GM23248 (cell line): ENCODE measurements at regions of chr17 and their contacts with region 1.

Region 1: DNA sequence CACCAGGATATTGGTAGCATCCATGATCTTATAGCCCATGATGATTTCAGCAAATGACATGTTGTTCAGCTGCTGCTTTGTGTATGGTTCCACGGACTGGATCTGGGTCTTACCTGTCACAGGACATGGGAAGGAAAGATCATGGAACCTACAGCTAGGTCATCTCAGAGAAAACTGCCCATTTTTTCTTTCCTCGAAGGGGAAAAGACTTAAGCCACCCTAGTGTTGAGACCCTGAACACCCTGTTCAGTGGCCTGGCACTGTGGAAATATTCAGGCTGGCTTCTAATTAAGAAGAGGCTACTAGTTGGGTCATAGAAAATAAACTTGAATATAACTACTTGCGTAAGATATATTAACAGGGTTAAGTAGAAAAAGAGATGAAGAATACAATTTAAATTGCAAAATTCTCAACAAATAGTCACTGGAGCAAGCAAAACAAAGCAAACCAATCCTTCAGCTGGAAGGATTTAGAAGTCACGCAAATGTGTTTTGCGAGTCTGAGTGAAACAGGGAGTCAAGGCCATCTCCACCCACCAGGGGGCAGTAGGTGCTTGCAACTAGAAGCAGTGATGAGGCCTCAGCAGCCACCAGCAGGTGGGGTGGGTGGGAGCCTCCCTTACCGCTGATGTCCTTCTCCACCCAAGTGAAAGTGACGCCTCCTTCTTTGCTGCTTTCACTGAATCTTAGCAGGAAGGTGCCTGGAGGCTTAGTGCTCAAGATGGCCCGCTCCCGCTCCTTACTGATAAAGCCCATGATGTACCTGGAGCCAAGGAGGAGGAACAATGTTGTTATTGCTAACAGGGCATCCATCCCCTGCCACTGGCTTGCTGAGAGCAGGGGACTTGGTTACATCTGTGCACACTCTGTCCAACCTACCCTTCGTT is 34.3 kb downstream of the STAT5A start:
- DNase-seq: peak; percentile 93
- H3K4me3 ChIP-seq: no peak overlapping the region
- H3K27ac ChIP-seq: peak overlapping the region; percentile 58
- H3K4me1 ChIP-seq: peaks cover 18% of the 10 kb centered on the region
- H3K27me3 ChIP-seq: no peaks in the 10 kb centered on the region

Region 2: DNA sequence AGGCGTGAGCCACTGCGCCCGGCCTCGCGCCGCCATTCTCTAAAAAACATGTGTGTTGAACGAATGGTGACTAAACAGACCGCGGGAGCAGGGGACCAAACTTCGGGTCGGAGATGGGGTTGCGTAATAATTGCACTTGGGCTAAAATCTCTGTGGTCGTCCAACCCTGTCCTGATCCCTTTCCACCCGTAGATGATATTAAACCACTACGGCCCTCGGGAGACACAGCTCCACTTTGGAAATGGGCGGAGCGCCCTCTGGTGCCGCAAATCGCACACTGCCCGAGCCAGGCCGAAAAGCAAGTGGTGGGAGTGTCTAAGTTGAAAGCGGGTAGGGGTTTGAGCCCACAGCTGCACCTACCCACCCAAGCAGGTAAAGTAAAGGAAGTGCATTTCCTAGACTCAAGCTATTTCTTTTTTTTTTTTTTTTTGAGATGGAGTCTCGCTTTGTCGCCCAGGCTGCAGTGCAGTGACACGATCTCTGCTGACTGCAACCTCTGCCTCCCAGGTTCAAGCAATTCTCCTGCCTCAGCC is 83.4 kb after region 1 on chr17:
- in situ Hi-C with region 1: loop called (anchors 10 kb)
- DNase-seq: peak; percentile 89
- H3K4me3 ChIP-seq: no peak overlapping the region
- H3K27ac ChIP-seq: peak overlapping the region; percentile 87
- H3K4me1 ChIP-seq: peaks cover 68% of the 10 kb centered on the region
- H3K27me3 ChIP-seq: no peaks in the 10 kb centered on the region

Region 3: GRCh38 chr17:42493319-42493718 is 170.7 kb after region 1 on chr17:
- in situ Hi-C with region 1: no loop called
- DNase-seq: no peak
- H3K4me3 ChIP-seq: no peak overlapping the region
- H3K27ac ChIP-seq: no peak overlapping the region
- H3K4me1 ChIP-seq: no peaks in the 10 kb centered on the region
- H3K27me3 ChIP-seq: no peaks in the 10 kb centered on the region

Region 4: GRCh38 chr17:42527273-42527703 is 204.7 kb after region 1 on chr17:
- in situ Hi-C with region 1: loop called (anchors 10 kb)
- DNase-seq: peak; percentile 88
- H3K4me3 ChIP-seq: no peak overlapping the region
- H3K27ac ChIP-seq: no peak overlapping the region
- H3K4me1 ChIP-seq: peaks cover 42% of the 10 kb centered on the region
- H3K27me3 ChIP-seq: no peaks in the 10 kb centered on the region